Heart right ventricle (tissue), 16 donors: ENCODE measurements at regions of chr7 and their contacts with region 1.

Region 1: DNA sequence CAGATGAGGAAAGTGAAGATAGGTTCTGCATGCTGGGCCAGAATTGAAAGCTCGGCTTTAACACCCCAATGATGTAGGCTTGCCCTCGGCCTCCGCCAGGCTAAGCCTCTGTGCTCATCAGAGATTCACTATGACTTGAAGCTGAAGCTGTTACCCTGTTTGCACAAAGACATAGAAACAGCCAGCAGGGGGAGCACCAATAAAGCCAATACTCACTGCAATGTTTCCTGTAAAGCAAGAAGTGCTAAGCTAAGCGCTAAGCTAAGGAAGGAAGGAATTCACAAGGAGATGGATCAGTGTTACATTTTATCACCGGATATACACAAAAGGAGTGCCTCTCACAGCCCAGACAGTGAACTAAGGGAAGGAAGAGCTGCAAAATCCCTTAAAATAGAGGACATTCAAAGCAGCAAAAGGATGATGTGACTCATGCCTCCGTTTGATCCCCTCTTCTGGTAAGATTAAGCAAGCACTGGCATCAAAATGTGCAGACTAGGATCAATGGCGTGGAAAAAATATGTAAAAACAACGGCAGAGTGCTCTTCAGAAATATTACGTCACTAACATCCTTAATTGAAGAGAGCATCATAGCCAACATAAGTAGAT is 153.8 kb downstream of the COBL start:
- DNase-seq: peak in 1 of 2 donors; percentile 80
- ATAC-seq: peak; percentile 66 to 89 (median 77)
- H3K4me3 ChIP-seq: no peak overlapping the region
- H3K27ac ChIP-seq: no peak overlapping the region
- H3K4me1 ChIP-seq: peaks cover 0 to 20% (median 6%) of the 10 kb centered on the region in 9 donors
- H3K27me3 ChIP-seq: no peaks in the 10 kb centered on the region
- CTCF ChIP-seq: peak; percentile 63 to 90 (median 82)

Region 2: GRCh38 chr7:50142425-50143017 is 1020.3 kb before region 1 on chr7:
- intact Hi-C with region 1: loop called in 4 of 10 experiments (anchors 5 kb)
- DNase-seq: peak in 1 of 2 donors; percentile 13
- ATAC-seq: no peak
- H3K4me3 ChIP-seq: no peak overlapping the region
- H3K27ac ChIP-seq: no peak overlapping the region
- H3K4me1 ChIP-seq: peaks cover 0 to 5% (median 0%) of the 10 kb centered on the region in 9 donors
- H3K27me3 ChIP-seq: peaks cover 0 to 37% (median 14%) of the 10 kb centered on the region in 7 donors
- CTCF ChIP-seq: peak; percentile 48 to 80 (median 73)

Region 3: GRCh38 chr7:50206453-50207250 is 956.2 kb before region 1 on chr7:
- intact Hi-C with region 1: loop called in 3 of 10 experiments (anchors 5 to 10 kb)
- DNase-seq: no peak
- ATAC-seq: peak in 3 of 8 donors; percentile 14 to 39 (median 18)
- H3K4me3 ChIP-seq: no peak overlapping the region
- H3K27ac ChIP-seq: peak overlapping the region in 1 of 10 donors; percentile 57
- H3K4me1 ChIP-seq: peaks cover 0 to 50% (median 0%) of the 10 kb centered on the region in 9 donors
- H3K27me3 ChIP-seq: peaks cover 0 to 27% (median 4%) of the 10 kb centered on the region in 7 donors
- CTCF ChIP-seq: no peak

Region 4: DNA sequence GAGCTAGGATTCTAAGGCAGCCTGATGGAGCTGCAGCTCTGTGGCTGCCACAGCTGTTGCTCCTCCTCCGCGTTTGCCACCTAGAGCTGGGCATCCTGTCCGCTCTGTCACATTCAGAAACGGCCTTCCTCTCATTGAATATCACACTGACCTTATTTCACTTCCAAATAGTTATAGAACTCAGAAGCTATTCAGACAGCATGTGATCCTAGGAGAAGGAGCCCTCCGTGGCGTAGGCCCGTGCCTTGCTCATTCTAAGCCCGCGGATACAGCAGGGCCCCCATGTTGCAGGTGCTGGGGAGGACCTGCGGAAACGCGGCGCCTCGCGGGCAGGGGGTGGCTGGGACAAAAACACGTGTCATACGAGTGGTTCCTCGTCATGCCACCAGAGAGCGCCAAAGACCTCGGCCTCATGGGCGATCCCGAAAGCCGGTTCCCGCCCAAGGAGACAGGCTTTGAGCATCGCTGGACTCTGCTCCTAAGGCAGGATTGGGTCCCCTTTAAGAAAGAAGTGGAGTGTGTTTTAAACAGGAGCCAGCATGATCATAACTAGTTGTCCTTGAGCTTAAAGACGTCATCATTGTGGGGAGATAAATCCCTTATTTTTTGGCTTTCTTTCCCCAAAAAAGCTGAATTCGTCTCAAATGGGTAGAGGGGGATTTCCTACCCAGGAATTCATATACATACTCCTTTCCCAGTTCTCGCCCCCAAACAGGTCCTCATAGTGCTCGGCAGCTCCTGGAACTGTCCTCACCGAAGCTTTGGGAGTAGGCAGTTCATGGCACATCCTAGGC is 694.8 kb before region 1 on chr7:
- intact Hi-C with region 1: loop called (anchors 2 to 5 kb)
- DNase-seq: peak; percentile 80 to 83
- ATAC-seq: peak; percentile 77 to 95 (median 93)
- H3K4me3 ChIP-seq: peak overlapping the region in 2 of 10 donors; percentile 20 to 21
- H3K27ac ChIP-seq: no peak overlapping the region
- H3K4me1 ChIP-seq: peaks cover 0 to 10% (median 0%) of the 10 kb centered on the region in 9 donors
- H3K27me3 ChIP-seq: peaks cover 0 to 7% (median 0%) of the 10 kb centered on the region in 7 donors
- CTCF ChIP-seq: peak; percentile 88 to 95 (median 91)

Region 5: DNA sequence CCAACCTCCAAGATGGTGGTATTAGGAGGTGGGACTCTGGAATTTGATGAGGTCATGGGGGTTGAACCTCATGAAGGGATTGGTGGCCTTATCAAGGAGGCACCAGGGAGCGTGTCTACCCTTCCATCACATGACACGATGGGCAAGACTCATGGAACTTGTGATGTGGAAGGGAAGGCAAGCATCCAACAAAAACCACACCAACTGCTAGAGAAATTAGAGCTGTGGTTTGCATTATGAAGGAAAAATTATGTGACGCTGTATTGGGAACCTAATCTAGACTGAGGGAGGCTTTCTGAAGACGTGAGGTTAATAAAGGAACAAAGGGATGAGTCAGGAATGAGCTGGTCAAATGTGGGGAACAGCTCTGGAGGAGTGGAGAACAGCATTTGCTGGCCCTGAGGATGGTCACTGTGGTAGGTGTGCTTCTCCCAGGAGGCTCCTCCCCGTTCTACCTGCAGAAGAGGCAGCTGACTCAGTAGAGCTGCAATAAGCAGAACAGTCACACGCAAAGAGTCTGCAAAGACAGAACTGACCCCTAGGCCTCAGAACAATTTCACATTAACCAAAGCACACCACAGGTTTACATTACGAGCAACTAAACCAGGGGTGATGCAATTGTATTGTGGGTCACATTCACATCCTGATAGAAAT is 143.5 kb before region 1 on chr7:
- intact Hi-C with region 1: no loop called
- DNase-seq: no peak
- ATAC-seq: no peak
- H3K4me3 ChIP-seq: no peak overlapping the region
- H3K27ac ChIP-seq: no peak overlapping the region
- H3K4me1 ChIP-seq: no peaks in the 10 kb centered on the region
- H3K27me3 ChIP-seq: no peaks in the 10 kb centered on the region
- CTCF ChIP-seq: no peak

Region 6: GRCh38 chr7:51366930-51367613 is 204.2 kb after region 1 on chr7:
- intact Hi-C with region 1: loop called (anchors 1 to 5 kb)
- DNase-seq: peak in 1 of 2 donors; percentile 30
- ATAC-seq: peak; percentile 80 to 94 (median 89)
- H3K4me3 ChIP-seq: no peak overlapping the region
- H3K27ac ChIP-seq: no peak overlapping the region
- H3K4me1 ChIP-seq: peaks cover 0 to 4% (median 0%) of the 10 kb centered on the region in 9 donors
- H3K27me3 ChIP-seq: peaks cover 0 to 3% (median 0%) of the 10 kb centered on the region in 7 donors
- CTCF ChIP-seq: peak; percentile 40 to 75 (median 67)